Activated CD8-positive, alpha-beta memory T cell treated with anti-CD3 and anti-CD28 coated beads, Interleukin-2, amount 10 ng/mL, durations not matched to agents 7 days and 5 days (primary cell): ENCODE measurements at regions of chr16 and their contacts with region 1.

Region 1: GRCh38 chr16:84518748-84519341 is 14.4 kb upstream of the MEAK7 start:
- DNase-seq: peak; percentile 96
- ATAC-seq: peak; percentile 52
- H3K4me3 Mint-ChIP-seq: peak overlapping the region; percentile 63
- H3K27ac Mint-ChIP-seq: peak overlapping the region; percentile 96
- H3K4me1 Mint-ChIP-seq: peaks cover 95% of the 10 kb centered on the region
- H3K27me3 Mint-ChIP-seq: no peaks in the 10 kb centered on the region

Region 2: GRCh38 chr16:84555418-84556195 is 36.8 kb after region 1 on chr16:
- CTCF ChIA-PET with region 1: interaction called, 101 read pairs
- DNase-seq: no peak
- ATAC-seq: no peak
- H3K4me3 Mint-ChIP-seq: peak overlapping the region; percentile 8
- H3K27ac Mint-ChIP-seq: peak overlapping the region; percentile 92
- H3K4me1 Mint-ChIP-seq: peaks cover 38% of the 10 kb centered on the region
- H3K27me3 Mint-ChIP-seq: no peaks in the 10 kb centered on the region

Region 3: DNA sequence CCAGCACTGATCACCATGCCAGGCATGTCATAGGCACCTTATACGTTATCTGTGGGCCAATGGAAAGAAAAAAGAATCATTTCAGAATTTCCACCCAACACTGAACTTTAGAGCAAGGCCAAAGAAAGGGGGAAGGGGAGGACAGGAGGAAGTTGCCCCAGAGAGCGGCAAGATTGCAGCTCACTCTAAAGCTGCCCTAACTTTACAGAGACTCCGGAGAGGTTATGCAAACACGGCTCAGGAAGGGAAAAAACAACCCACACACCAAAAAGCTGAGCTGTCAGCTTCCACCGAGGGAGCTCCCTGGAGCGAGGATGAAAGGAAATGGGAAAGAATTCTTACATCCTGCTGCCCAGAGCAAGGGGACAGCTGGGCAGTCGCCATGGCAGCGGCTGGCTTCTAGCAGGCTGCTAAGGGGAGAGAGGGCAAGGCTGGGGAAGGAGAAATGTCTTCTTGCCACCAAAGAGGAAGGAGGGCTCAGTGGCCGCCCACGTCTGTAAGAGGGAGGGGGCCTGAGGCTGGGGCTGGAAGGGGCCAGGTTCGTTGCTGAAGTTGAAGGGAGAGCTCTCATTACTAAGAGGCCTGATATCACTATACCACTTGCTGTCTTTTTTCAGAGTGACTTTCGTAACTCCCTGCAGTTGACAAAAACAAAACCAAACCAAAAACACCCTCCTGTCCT is 80.8 kb after region 1 on chr16:
- CTCF ChIA-PET with region 1: interaction called, 15 read pairs
- DNase-seq: peak; percentile 83
- ATAC-seq: peak; percentile 21
- H3K4me3 Mint-ChIP-seq: peak overlapping the region; percentile 77
- H3K27ac Mint-ChIP-seq: peak overlapping the region; percentile 97
- H3K4me1 Mint-ChIP-seq: peaks cover 87% of the 10 kb centered on the region
- H3K27me3 Mint-ChIP-seq: no peaks in the 10 kb centered on the region